Cardiac septum (tissue), 1 donor: ENCODE measurements at regions of chr12 and their contacts with region 1.

Region 1: DNA sequence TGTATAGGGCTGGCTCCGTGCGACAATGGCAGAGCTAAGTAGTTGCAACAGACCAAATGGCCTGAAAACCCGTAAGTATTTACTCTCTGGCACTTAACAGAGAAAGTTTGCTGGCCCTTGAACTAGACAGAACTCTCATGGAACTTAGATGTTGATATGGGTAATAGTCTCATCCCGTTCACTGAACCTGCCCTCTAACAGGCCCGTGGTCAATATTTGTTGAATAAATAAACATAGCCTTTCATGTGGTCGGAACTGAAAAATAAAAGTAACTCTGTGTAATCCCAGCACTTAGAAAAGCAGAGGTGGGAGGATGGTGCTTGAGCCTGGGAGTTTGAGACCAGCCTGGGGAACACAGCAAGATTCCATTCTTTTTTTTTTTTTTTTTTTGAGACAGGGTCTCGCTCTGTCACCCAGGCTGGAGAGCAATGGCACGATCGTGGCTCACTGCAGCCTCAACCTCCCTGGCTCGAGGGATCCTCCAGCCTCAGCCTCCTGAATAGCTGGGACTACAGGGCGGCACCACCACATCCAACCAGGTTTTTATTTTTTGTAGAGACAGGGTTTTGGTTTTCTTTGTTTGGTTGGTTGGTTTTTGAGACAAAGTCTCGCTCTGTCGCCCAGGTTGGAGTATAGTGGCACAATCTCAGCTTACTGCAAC is 29.7 kb downstream of the KDM2B start:
- DNase-seq: no peak

Region 2: GRCh38 chr12:121626087-121626852 is 75.2 kb after region 1 on chr12 and contains the start of gene ORAI1:
- intact Hi-C with region 1: loop called (anchors 5 kb)
- DNase-seq: peak; percentile 99
- total RNA-seq, gene ORAI1: 8.0 TPM

Region 3: DNA sequence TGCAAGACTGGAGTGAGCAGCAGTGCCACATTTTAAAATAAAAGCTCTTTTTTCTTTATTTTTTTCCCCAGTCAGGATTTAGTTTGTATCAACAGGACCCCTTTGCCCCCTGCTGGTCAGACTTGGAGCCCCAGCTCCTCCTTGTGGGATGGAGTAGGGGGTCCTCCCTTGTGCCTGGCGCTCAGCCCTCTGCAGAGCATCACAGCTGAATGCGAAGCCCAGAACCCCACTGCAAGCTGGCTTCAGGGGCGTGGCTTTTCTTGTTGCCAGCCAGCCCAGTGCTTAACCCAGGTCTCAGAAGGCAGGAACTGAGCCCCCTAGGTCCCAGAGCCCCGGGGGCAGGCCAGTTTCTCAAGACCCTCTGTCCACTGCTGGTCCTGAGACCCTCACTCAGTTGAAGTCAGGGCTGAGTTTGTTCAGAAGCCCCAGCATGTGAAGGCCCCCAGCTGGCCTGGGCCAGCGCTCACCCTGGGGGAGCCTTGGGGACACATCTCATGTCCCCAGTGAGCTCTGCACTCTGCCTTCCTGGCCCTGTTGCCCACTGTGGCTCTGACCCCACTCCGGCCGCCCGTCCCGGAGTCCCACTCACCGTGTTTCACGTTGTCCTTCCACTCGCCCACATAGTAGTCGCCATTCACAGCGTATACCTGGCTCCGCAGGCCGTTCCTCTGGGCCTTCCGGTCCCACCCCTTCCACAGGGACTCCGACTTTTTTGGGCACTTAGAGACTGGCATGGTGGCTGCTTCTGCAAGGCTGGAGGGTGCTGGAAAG is 117.8 kb after region 1 on chr12:
- intact Hi-C with region 1: loop called (anchors 5 kb)
- DNase-seq: no peak